ENCODE measurements at regions of chr4 and their contacts with region 1.

Region 1: DNA sequence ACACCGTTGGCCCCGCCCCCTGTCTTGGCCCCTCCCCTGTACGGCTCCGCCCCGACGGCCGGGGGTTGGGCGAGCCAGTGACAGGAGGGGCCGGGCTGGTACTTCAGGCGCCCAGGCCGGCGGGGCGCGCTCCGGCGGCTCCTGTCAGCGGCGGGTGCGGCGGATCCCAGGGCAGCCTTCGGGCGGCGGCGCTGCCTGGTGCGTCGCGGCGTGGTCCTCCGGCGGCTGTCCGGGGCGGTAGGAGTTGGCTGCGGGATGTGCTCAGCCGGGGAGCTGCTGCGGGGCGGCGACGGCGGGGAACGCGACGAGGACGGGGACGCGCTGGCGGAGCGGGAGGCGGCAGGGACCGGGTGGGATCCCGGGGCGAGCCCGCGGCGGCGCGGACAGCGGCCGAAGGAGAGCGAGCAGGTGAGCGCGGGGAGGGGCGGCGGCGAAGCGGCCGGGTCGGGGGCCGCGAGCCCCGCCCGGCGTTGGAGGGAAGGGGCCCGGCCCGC is at the start of gene FAM241A:
- DNase-seq: peak; percentile 83
- H3K4me3 Mint-ChIP-seq: peak within 1 kb of the TSS; percentile 79
- H3K27ac Mint-ChIP-seq: peak within 1 kb of the TSS; percentile 63
- H3K4me1 Mint-ChIP-seq: peaks cover 16% of the 10 kb centered on the region
- H3K27me3 Mint-ChIP-seq: no peaks in the 10 kb centered on the region
- CTCF ChIP-seq: no peak
- total RNA-seq, gene FAM241A: 8.2 and 10.9 TPM in 2 replicates

Region 2: DNA sequence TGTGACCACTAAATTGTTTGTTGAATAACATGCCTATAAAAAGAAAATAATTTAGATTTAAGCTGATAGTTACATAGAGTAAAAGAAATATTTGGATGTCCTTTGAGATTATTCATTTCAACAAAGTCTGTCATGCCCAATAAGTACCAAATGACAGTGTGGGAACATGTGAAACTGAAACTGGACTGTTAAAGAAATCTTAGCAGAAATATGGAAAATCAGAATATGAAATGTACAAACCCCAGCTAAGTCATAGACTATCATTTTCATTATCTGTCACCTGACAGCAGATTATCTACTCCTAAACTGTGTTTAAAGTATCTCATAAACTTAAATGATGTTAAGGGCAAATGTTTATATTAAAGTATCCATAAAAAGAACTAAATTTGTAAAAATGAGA is 437.9 kb before region 1 on chr4:
- CTCF ChIA-PET with region 1: no interaction called
- POLR2A ChIA-PET with region 1: no interaction called
- intact Hi-C with region 1: no loop called
- DNase-seq: no peak
- H3K4me3 Mint-ChIP-seq: no peak overlapping the region
- H3K27ac Mint-ChIP-seq: no peak overlapping the region
- H3K4me1 Mint-ChIP-seq: no peaks in the 10 kb centered on the region
- H3K27me3 Mint-ChIP-seq: peaks cover 81% of the 10 kb centered on the region
- CTCF ChIP-seq: no peak

Region 3: DNA sequence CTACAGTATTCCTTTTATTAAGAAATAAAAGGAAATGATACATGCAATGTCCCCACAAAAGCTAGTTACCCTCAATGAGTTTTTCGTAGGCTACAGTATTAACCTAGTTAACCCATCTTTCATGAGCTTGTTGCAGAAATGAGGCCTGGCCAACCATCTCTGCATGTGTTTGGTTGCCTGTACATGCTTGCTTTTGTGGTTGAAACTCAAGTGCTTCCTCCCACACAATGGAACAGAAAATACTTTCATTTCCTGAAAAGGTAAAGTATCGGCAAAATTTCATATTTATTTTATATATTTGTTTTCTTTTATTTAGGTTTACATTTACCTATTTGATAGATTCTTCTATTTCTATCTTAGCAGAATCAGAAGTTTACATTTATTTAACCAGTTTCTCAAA is 214.7 kb before region 1 on chr4:
- CTCF ChIA-PET with region 1: no interaction called
- POLR2A ChIA-PET with region 1: no interaction called
- intact Hi-C with region 1: no loop called
- DNase-seq: no peak
- H3K4me3 Mint-ChIP-seq: no peak overlapping the region
- H3K27ac Mint-ChIP-seq: no peak overlapping the region
- H3K4me1 Mint-ChIP-seq: no peaks in the 10 kb centered on the region
- H3K27me3 Mint-ChIP-seq: peaks cover 70% of the 10 kb centered on the region
- CTCF ChIP-seq: no peak

Region 4: DNA sequence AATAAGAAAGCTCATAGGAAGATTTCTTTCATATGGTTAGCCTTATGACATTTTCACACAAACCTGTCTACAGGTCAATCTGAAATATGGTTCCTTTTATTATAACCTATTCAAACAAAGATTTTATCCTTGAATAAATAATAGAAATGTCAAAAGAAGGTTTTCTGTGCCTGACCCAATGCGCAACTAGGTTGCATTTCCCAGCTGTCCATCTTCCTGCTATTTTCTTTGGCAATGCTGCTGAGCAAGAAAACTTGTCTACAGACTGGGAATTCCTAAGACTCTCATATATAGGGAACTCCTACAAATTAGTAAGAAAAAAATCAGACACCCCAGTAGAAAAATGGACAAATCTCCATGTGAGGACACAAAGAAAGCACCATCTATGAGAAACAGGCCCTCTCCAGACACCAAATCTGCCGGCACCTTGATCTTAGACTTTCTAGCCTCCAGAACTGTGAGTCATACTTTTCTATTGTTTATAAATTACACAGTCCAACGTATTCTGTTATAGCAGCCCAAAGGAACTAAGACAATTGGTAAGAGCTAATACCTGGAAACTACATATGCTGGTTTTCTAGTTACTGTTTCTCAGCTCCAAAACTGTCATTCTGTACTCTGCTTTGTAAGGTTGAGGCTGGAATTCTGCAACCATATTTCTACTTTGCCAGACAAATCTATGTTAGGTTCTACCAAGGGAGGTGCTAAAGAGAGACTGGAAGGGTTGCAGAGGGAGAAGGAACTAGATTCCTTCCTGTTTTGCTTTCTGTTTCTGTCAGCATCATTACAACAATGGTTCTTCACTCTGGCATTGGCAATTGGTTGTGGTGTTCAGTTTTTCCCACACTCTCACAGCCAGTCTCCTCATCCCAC is 36.0 kb before region 1 on chr4:
- CTCF ChIA-PET with region 1: interaction called, 5 read pairs
- POLR2A ChIA-PET with region 1: interaction called, 12 read pairs
- intact Hi-C with region 1: loop called (anchors 5 kb)
- DNase-seq: peak; percentile 78
- H3K4me3 Mint-ChIP-seq: no peak overlapping the region
- H3K27ac Mint-ChIP-seq: no peak overlapping the region
- H3K4me1 Mint-ChIP-seq: peaks cover 16% of the 10 kb centered on the region
- H3K27me3 Mint-ChIP-seq: no peaks in the 10 kb centered on the region
- CTCF ChIP-seq: no peak

Region 5: GRCh38 chr4:112170451-112170993 is 25.1 kb after region 1 on chr4:
- CTCF ChIA-PET with region 1: interaction called, 3 read pairs
- POLR2A ChIA-PET with region 1: interaction called, 63 read pairs
- intact Hi-C with region 1: loop called (anchors 2 kb)
- DNase-seq: peak; percentile 91
- H3K4me3 Mint-ChIP-seq: peak overlapping the region; percentile 11
- H3K27ac Mint-ChIP-seq: peak overlapping the region; percentile 89
- H3K4me1 Mint-ChIP-seq: peaks cover 47% of the 10 kb centered on the region
- H3K27me3 Mint-ChIP-seq: no peaks in the 10 kb centered on the region
- CTCF ChIP-seq: no peak

Region 6: GRCh38 chr4:112183252-112183651 is 37.9 kb after region 1 on chr4:
- CTCF ChIA-PET with region 1: interaction called, 3 read pairs
- POLR2A ChIA-PET with region 1: interaction called, 11 read pairs
- intact Hi-C with region 1: loop called (anchors 5 kb)
- DNase-seq: no peak
- H3K4me3 Mint-ChIP-seq: no peak overlapping the region
- H3K27ac Mint-ChIP-seq: peak overlapping the region; percentile 88
- H3K4me1 Mint-ChIP-seq: peaks cover 15% of the 10 kb centered on the region
- H3K27me3 Mint-ChIP-seq: no peaks in the 10 kb centered on the region
- CTCF ChIP-seq: no peak

Region 7: DNA sequence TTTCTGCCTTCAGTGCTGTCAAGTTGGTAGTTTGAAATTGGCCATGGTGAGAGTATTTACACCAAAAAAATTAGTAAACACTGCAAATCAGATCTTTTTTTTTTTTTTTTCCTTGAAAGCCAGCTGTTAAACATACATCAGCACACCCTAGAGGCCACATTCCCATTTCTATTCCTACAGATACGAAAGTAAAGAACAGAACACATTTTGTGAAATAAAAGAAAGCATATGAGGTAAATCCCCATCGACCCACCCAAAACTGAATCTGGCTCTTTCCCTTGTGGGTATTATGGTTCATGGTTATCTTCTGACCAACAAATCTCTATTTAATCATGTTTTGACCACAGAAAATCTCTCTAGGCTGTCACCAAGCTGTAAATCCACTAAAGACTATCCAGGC is 44.4 kb after region 1 on chr4:
- CTCF ChIA-PET with region 1: interaction called, 3 read pairs
- POLR2A ChIA-PET with region 1: interaction called, 7 read pairs
- intact Hi-C with region 1: loop called (anchors 5 kb)
- DNase-seq: no peak
- H3K4me3 Mint-ChIP-seq: no peak overlapping the region
- H3K27ac Mint-ChIP-seq: no peak overlapping the region
- H3K4me1 Mint-ChIP-seq: no peaks in the 10 kb centered on the region
- H3K27me3 Mint-ChIP-seq: no peaks in the 10 kb centered on the region
- CTCF ChIP-seq: peak; percentile 6

Region 8: DNA sequence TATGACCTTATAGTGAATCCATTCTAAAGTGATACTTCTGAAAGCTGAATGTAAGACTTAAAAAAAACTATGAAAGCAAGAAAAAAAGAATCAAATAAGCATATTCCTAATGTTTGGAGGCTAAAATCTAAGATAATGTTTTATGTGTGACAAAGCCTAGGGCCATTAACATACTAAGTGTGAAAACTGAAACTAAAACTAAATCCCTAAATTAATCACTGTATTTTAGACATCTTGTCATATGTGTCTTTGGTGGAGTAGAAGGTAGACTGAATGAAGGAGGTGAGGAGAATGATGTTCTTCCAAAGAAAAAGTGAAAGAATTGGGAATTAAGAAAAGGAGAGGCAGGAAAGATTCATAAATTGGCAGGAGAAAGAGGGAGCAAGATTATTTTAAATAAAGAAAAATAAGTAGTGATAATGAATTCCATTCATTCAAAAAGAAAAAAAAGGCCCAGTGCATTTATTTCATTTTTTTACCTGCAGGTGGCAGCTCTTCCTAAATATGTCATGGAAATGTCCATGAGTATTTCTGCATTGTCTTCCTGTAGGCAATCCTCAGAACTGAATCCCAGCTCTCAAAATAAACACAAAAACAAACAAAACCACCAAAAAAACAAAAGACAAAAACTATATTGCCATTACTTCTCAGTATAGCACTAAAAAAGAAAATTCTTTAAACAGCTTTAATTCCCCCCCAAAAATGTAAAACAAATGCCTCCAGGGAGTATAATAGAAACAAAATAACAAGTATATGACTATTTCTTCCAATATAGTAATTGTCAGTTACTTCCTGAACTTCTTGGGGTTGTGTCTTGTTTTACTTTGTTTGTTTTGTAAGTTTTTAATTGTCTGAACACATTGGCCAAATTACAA is 69.3 kb after region 1 on chr4:
- CTCF ChIA-PET with region 1: interaction called, 3 read pairs
- POLR2A ChIA-PET with region 1: interaction called, 20 read pairs
- intact Hi-C with region 1: no loop called
- DNase-seq: peak; percentile 61
- H3K4me3 Mint-ChIP-seq: no peak overlapping the region
- H3K27ac Mint-ChIP-seq: peak overlapping the region; percentile 90
- H3K4me1 Mint-ChIP-seq: peaks cover 12% of the 10 kb centered on the region
- H3K27me3 Mint-ChIP-seq: no peaks in the 10 kb centered on the region
- CTCF ChIP-seq: peak; percentile 48

Measured in MCF 10A (cell line).